PC-9 (cell line): ENCODE measurements at regions of chr5 and their contacts with region 1.

Region 1: GRCh38 chr5:10695055-10695649 is 65.9 kb downstream of the DAP start:
- DNase-seq: peak; percentile 66 to 93
- H3K4me3 ChIP-seq: no peak overlapping the region
- H3K27ac ChIP-seq: peak overlapping the region; percentile 42
- H3K4me1 ChIP-seq: peaks cover 24% of the 10 kb centered on the region
- H3K27me3 ChIP-seq: no peaks in the 10 kb centered on the region
- CTCF ChIP-seq: peak; percentile 90

Region 2: GRCh38 chr5:10467240-10468198 is 227.6 kb before region 1 on chr5:
- CTCF ChIA-PET with region 1: interaction called, 10 read pairs
- POLR2A ChIA-PET with region 1: no interaction called
- intact Hi-C with region 1: no loop called
- DNase-seq: peak; percentile 73
- H3K4me3 ChIP-seq: no peak overlapping the region; the same call in 1 of the 2 replicates
- H3K27ac ChIP-seq: peak overlapping the region; percentile 80
- H3K4me1 ChIP-seq: peaks cover 22% of the 10 kb centered on the region
- H3K27me3 ChIP-seq: no peaks in the 10 kb centered on the region
- CTCF ChIP-seq: no peak

Region 3: DNA sequence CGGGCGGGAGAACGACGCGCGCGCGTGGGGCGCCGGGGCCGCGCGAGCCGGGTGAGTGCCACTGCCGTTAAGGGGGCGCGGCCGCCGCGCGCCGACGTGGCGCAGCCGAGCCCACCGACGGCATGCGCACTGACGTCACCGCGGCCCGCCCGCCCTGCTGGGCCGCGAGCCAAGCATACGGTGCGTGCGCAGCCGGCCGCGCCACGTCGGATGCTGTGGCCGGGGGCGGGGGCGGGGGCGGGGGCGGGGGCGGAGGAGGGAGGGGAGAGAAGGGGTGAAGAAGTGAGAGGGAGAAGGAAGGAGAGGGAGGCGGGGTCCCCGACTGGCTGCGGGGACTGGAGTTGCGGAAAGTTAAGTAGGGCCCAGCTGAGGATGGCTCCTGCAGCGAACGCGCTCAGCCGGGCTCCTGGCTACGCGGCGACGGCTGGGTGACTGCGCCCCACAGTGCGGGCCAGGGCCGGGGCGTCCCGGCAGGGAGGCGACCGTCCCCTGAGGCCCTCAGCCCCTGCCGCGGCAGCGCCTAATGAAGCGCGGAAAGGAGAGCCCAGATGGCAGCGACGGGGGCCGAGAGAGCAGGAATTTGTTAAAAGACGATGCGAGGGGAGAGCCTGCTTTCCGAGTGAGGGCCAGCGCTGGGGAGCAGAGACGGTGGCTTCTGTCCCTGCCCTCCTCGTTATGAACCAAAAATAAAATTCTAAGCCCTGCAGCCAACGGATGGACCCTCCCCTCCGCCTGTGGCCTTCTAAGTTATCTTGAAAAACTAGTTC is 66.2 kb after region 1 on chr5 and contains the start of gene DAP:
- CTCF ChIA-PET with region 1: no interaction called
- POLR2A ChIA-PET with region 1: no interaction called
- intact Hi-C with region 1: loop called (anchors 2 kb)
- DNase-seq: peak; percentile 60 to 99
- H3K4me3 ChIP-seq: peak within 1 kb of the TSS; percentile 85
- H3K27ac ChIP-seq: peak within 1 kb of the TSS; percentile 80
- H3K4me1 ChIP-seq: peaks cover 36% of the 10 kb centered on the region
- H3K27me3 ChIP-seq: no peaks in the 10 kb centered on the region
- CTCF ChIP-seq: no peak
- total RNA-seq, gene DAP: 256 and 279 TPM in 2 replicates

Region 4: DNA sequence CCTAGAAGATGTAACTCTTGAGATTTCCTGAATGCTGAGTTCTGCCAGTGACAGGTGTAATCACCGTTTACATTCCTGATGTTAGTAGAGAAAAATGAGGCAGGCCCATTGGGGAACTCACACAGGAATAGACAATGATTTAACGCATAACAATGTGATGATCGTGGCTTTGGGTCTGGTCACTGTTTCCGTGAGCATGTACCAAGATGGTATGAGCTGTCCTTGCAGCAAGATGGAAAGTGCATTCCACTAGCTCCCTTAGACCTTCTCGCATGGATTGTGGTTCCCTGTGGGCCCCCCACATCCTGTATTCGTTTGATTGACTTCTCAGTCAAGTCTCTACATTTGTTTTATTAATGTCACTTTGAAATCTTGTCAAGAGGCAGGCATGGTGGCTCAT is 189.9 kb after region 1 on chr5:
- CTCF ChIA-PET with region 1: interaction called, 17 read pairs
- POLR2A ChIA-PET with region 1: no interaction called
- intact Hi-C with region 1: no loop called
- DNase-seq: peak in 1 of 2 experiments; percentile 52
- H3K4me3 ChIP-seq: no peak overlapping the region
- H3K27ac ChIP-seq: no peak overlapping the region
- H3K4me1 ChIP-seq: no peaks in the 10 kb centered on the region
- H3K27me3 ChIP-seq: no peaks in the 10 kb centered on the region
- CTCF ChIP-seq: no peak

Region 5: DNA sequence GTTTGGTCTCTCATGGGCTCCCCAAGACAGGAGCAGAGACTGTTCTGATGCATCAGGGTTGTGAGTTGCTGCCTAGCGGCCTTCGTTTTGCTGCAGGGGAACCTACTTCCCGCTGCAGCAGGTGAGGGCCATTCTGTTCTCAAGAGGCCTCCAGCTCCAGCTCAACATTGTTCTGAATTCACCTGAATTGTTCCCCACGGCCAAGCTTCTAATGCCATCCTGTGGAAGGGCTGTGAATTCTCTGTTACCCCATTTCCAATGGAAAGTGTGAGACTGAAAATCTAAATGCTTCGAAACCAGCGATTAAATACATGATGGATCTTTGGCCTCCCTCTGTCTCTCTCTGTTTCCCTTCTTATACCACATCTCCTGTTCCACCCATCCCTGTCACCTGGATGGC is 415.0 kb after region 1 on chr5:
- CTCF ChIA-PET with region 1: interaction called, 3 read pairs
- POLR2A ChIA-PET with region 1: no interaction called
- intact Hi-C with region 1: loop called (anchors 1 kb)
- DNase-seq: peak in 1 of 2 experiments; percentile 14
- H3K4me3 ChIP-seq: no peak overlapping the region
- H3K27ac ChIP-seq: no peak overlapping the region
- H3K4me1 ChIP-seq: no peaks in the 10 kb centered on the region
- H3K27me3 ChIP-seq: peaks cover 22% of the 10 kb centered on the region
- CTCF ChIP-seq: no peak

Region 6: GRCh38 chr5:11182441-11183268 is 487.5 kb after region 1 on chr5:
- CTCF ChIA-PET with region 1: interaction called, 3 read pairs
- POLR2A ChIA-PET with region 1: no interaction called
- intact Hi-C with region 1: loop called (anchors 1 kb)
- DNase-seq: peak; percentile 19 to 34
- H3K4me3 ChIP-seq: no peak overlapping the region
- H3K27ac ChIP-seq: no peak overlapping the region
- H3K4me1 ChIP-seq: no peaks in the 10 kb centered on the region
- H3K27me3 ChIP-seq: peaks cover 33% of the 10 kb centered on the region
- CTCF ChIP-seq: peak; percentile 71

Region 7: GRCh38 chr5:11619339-11620024 is 924.3 kb after region 1 on chr5:
- CTCF ChIA-PET with region 1: no interaction called
- POLR2A ChIA-PET with region 1: no interaction called
- intact Hi-C with region 1: loop called (anchors 10 kb)
- DNase-seq: no peak
- H3K4me3 ChIP-seq: no peak overlapping the region
- H3K27ac ChIP-seq: no peak overlapping the region
- H3K4me1 ChIP-seq: no peaks in the 10 kb centered on the region
- H3K27me3 ChIP-seq: no peaks in the 10 kb centered on the region
- CTCF ChIP-seq: peak; percentile 37; the same call in 1 of the 2 replicates